Psoas muscle (tissue), 8 donors: ENCODE measurements at regions of chr7 and their contacts with region 1.

Region 1: DNA sequence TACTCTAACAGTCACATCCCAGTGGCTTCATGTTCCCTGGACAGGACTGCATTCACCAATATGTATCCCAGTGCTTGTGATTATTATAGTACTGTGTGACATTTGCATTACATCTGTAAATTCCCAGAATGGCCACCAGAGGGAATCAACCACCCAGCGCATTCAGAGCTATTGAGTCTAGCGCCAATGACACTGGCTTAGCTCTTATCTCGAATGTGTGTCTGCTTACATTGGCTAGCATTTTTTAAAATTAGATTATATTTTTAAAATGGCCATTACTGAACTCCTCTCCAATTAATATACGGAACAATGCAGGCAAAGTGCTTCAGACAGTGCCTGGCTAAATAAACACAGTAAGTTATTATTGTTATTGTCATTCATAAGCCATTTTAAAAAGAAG is 36.3 kb downstream of the TRIL start:
- DNase-seq: no peak
- ATAC-seq: peak; percentile 93 to 98 (median 95)
- H3K4me3 ChIP-seq: no peak overlapping the region
- H3K27ac ChIP-seq: no peak overlapping the region
- H3K4me1 ChIP-seq: peaks cover 12% of the 10 kb centered on the region
- H3K27me3 ChIP-seq: no peaks in the 10 kb centered on the region
- CTCF ChIP-seq: peak; percentile 88

Region 2: GRCh38 chr7:28754027-28754426 is 167.8 kb before region 1 on chr7:
- intact Hi-C with region 1: no loop called
- DNase-seq: no peak
- ATAC-seq: no peak
- H3K4me3 ChIP-seq: no peak overlapping the region
- H3K27ac ChIP-seq: no peak overlapping the region
- H3K4me1 ChIP-seq: peaks cover 8% of the 10 kb centered on the region
- H3K27me3 ChIP-seq: no peaks in the 10 kb centered on the region
- CTCF ChIP-seq: no peak

Region 3: GRCh38 chr7:28823582-28823981 is 98.2 kb before region 1 on chr7:
- intact Hi-C with region 1: no loop called
- DNase-seq: no peak
- ATAC-seq: no peak
- H3K4me3 ChIP-seq: no peak overlapping the region
- H3K27ac ChIP-seq: no peak overlapping the region
- H3K4me1 ChIP-seq: no peaks in the 10 kb centered on the region
- H3K27me3 ChIP-seq: no peaks in the 10 kb centered on the region
- CTCF ChIP-seq: no peak

Region 4: DNA sequence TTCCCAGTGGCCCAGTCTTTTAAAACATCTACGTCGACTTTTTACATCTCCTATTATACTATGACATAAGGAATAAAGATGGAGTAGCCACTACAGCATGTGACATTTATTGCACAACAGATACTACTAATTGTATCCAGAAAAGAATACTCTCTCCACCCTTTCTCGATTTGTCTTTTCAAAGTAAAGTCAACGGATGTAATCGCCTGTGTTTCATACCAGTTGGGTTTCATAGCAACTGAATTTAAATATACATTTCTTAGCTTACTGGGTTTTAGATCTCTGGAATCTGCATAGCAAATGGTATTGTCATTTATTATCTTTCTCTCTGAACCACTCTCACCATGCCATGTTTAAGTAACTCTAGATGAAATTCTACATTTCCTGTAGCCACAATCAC is 122.7 kb after region 1 on chr7:
- intact Hi-C with region 1: no loop called
- DNase-seq: no peak
- ATAC-seq: no peak
- H3K4me3 ChIP-seq: no peak overlapping the region
- H3K27ac ChIP-seq: no peak overlapping the region
- H3K4me1 ChIP-seq: peaks cover 13% of the 10 kb centered on the region
- H3K27me3 ChIP-seq: no peaks in the 10 kb centered on the region
- CTCF ChIP-seq: no peak

Region 5: GRCh38 chr7:29254591-29254990 is 332.8 kb after region 1 on chr7:
- intact Hi-C with region 1: loop called in 1 of 2 experiments (anchors 5 kb)
- DNase-seq: no peak
- ATAC-seq: peak in 1 of 4 donors; percentile 41
- H3K4me3 ChIP-seq: no peak overlapping the region
- H3K27ac ChIP-seq: no peak overlapping the region
- H3K4me1 ChIP-seq: peaks cover 11% of the 10 kb centered on the region
- H3K27me3 ChIP-seq: no peaks in the 10 kb centered on the region
- CTCF ChIP-seq: no peak